ENCODE measurements at regions of chr2 and their contacts with region 1.

Region 1: GRCh38 chr2:23824777-23825212 is 102.1 kb downstream of the ATAD2B start:
- DNase-seq: no peak
- ATAC-seq: peak; percentile 52
- H3K4me3 Mint-ChIP-seq: no peak overlapping the region
- H3K27ac Mint-ChIP-seq: no peak overlapping the region
- H3K4me1 Mint-ChIP-seq: no peaks in the 10 kb centered on the region
- H3K27me3 Mint-ChIP-seq: no peaks in the 10 kb centered on the region
- CTCF ChIP-seq: peak; percentile 54

Region 2: GRCh38 chr2:23767876-23768621 is 56.7 kb before region 1 on chr2:
- CTCF ChIA-PET with region 1: no interaction called
- POLR2A ChIA-PET with region 1: no interaction called
- DNase-seq: no peak
- ATAC-seq: no peak
- H3K4me3 Mint-ChIP-seq: no peak overlapping the region
- H3K27ac Mint-ChIP-seq: no peak overlapping the region
- H3K4me1 Mint-ChIP-seq: no peaks in the 10 kb centered on the region
- H3K27me3 Mint-ChIP-seq: no peaks in the 10 kb centered on the region
- CTCF ChIP-seq: no peak

Region 3: DNA sequence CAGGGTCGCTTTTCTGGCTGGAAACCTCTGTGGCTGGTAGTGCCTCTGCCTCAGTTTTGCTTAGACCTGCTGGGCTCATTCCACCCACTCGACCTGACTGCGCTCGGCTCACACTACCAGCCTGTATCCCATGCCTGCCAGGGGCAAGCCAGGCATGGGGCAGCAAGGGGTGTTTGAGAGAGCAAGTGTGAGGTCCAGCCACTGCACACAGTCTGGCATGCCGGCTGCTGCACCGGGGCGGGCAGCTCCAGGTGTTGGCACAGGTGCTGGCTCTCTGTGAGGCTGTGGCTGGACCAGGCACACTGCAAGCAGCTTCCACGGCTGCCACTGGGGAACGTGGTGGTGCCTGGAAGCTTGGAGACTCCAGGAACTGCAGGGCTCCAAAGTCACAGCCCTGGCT is 11.2 kb after region 1 on chr2:
- CTCF ChIA-PET with region 1: interaction called, 14 read pairs
- POLR2A ChIA-PET with region 1: no interaction called
- DNase-seq: no peak
- ATAC-seq: no peak
- H3K4me3 Mint-ChIP-seq: no peak overlapping the region
- H3K27ac Mint-ChIP-seq: no peak overlapping the region
- H3K4me1 Mint-ChIP-seq: no peaks in the 10 kb centered on the region
- H3K27me3 Mint-ChIP-seq: no peaks in the 10 kb centered on the region
- CTCF ChIP-seq: no peak

Region 4: DNA sequence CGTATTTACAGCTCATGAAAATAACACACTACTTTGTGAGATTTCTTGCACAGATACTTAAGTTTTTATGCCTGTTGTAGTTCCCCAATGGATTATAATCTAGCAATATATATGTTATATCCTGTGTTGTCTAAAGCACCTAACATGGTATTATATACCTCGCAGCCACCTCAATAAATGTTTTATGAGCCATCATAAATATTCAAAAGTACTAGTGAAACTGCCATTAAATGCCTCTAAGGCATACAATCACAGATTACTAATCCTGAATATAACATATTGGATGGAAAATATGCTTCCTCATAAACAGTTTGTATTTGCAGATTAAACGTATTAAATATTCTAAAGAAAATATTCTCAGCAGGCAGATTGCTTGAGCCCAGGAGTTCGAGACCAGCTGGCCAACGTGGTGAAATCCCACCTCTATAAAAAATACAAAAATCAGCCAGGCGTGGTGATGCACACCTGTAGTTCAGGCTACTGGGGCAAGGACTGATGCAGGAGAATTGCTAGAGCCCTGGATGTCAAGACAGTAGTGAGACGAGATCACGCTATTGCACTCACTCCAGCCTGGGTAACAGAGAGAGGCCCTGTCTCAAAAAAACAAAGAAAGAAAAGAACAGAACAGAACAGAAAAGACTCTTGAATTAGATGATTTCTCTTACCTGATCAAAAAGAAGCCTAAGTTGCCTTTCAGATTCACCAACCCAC is 38.1 kb after region 1 on chr2:
- CTCF ChIA-PET with region 1: interaction called, 16 read pairs
- POLR2A ChIA-PET with region 1: no interaction called
- DNase-seq: no peak
- ATAC-seq: peak; percentile 74
- H3K4me3 Mint-ChIP-seq: 0 out of 2 replicates have a peak overlapping the region, but pooled peaks have one; percentile 4
- H3K27ac Mint-ChIP-seq: peak overlapping the region; percentile 79
- H3K4me1 Mint-ChIP-seq: peaks cover 18% of the 10 kb centered on the region
- H3K27me3 Mint-ChIP-seq: no peaks in the 10 kb centered on the region
- CTCF ChIP-seq: no peak